ENCODE measurements at regions of chr4 and their contacts with region 1.

Region 1: GRCh38 chr4:38319456-38320342 is 344.3 kb upstream of the KLF3 start:
- DNase-seq: peak; percentile 99
- H3K4me3 ChIP-seq: peak overlapping the region; percentile 29 to 46 (median 38)
- H3K27ac ChIP-seq: peak overlapping the region; percentile 73 to 85 (median 80)
- H3K4me1 ChIP-seq: peaks cover 20 to 40% (median 29%) of the 10 kb centered on the region in 4 donors
- H3K27me3 ChIP-seq: no peaks in the 10 kb centered on the region
- CTCF ChIP-seq: peak in 2 of 3 experiments; percentile 98 to 99
- EP300 ChIP-seq: no peak
- POLR2A ChIP-seq: no peak

Region 2: GRCh38 chr4:38062088-38062893 is 257.4 kb before region 1 on chr4:
- intact Hi-C with region 1: loop called (anchors 10 kb)
- DNase-seq: peak; percentile 96
- H3K4me3 ChIP-seq: peak overlapping the region; percentile 28 to 46 (median 40)
- H3K27ac ChIP-seq: peak overlapping the region; percentile 22 to 63 (median 56)
- H3K4me1 ChIP-seq: peaks cover 4 to 37% (median 18%) of the 10 kb centered on the region in 4 donors
- H3K27me3 ChIP-seq: no peaks in the 10 kb centered on the region
- CTCF ChIP-seq: peak; percentile 72 to 84 (median 83)
- EP300 ChIP-seq: no peak
- POLR2A ChIP-seq: no peak

Region 3: DNA sequence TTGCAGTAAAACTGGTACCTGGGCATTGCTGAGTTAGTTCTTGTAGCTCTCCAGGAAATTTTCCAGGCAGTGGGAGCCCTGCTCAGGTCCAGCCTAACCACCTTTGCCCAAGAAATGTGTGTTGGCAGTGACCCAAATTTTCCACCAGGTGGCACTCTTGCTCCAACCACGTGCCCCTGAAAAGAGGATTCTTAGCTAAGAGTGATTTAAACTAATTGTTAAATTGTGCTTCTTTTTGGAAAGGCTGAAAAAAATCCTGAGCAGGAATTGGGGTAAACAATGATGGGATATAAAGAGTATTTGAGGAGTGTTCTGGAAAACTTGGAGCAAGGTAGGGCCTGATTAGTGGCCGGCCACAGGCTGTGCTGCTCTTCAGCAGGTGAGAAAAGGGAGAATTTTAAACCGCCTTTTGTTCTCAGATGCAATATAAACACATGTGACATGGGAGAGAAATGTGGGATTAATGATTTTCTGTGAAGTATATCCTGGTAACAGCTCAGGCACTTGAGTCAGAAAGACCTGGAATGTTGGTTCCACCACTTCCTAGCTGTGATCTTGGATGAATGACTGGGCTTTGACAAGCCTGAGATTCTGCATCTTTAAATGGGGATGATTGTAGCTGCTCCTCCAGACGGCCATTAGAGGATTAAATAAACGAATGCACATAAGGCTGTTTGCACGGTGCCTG is 139.9 kb before region 1 on chr4:
- intact Hi-C with region 1: loop called (anchors 2 kb)
- DNase-seq: peak; percentile 94
- H3K4me3 ChIP-seq: no peak overlapping the region
- H3K27ac ChIP-seq: peak overlapping the region in 3 of 4 donors; percentile 55 to 57 (median 56)
- H3K4me1 ChIP-seq: peaks cover 10 to 16% (median 12%) of the 10 kb centered on the region in 4 donors
- H3K27me3 ChIP-seq: no peaks in the 10 kb centered on the region
- CTCF ChIP-seq: peak; percentile 86 to 94 (median 93)
- EP300 ChIP-seq: no peak
- POLR2A ChIP-seq: peak; percentile 10

Region 4: GRCh38 chr4:38230121-38230801 is 89.4 kb before region 1 on chr4:
- intact Hi-C with region 1: no loop called
- DNase-seq: peak; percentile 72
- H3K4me3 ChIP-seq: no peak overlapping the region
- H3K27ac ChIP-seq: no peak overlapping the region
- H3K4me1 ChIP-seq: no peaks in the 10 kb centered on the region
- H3K27me3 ChIP-seq: no peaks in the 10 kb centered on the region
- CTCF ChIP-seq: no peak
- EP300 ChIP-seq: no peak
- POLR2A ChIP-seq: no peak

Region 5: GRCh38 chr4:38730830-38731646 is 411.3 kb after region 1 on chr4:
- intact Hi-C with region 1: loop called (anchors 2 kb)
- DNase-seq: no peak
- H3K4me3 ChIP-seq: no peak overlapping the region
- H3K27ac ChIP-seq: no peak overlapping the region
- H3K4me1 ChIP-seq: peaks cover 7 to 10% (median 9%) of the 10 kb centered on the region in 4 donors
- H3K27me3 ChIP-seq: no peaks in the 10 kb centered on the region
- CTCF ChIP-seq: peak; percentile 91 to 97 (median 95)
- EP300 ChIP-seq: no peak
- POLR2A ChIP-seq: no peak